ENCODE measurements at regions of chr5 and their contacts with region 1.

Region 1: DNA sequence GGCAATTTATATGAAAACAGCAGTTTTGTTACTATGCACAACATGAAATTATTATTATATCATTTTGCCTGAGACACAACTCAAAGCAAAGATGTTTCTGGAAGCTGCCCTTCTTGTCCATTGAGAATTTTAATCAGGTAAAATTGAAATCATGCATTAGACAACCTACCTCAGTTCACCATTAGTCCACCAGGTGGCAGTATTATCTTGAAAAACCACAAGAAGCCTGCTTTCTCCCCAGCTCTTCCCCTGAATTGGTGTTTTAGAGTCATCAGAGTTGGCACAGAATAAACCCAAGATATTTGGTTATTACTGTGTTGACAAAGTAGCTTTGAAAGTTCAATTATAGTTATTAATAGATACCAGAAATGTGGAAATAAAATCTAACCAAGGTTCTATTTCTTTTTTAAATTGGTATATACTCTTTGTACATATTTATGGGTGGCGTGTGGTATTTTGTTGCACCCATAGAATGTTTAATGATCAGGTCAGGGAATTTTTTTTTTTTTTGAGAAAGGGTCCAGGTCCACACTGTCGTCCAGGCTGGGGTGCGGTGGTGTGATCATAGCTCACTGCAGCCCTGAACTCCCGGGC is 25.7 kb downstream of the UTP15 start:
- DNase-seq: peak; percentile 32
- H3K4me3 Mint-ChIP-seq: no peak overlapping the region
- H3K27ac Mint-ChIP-seq: no peak overlapping the region
- H3K4me1 Mint-ChIP-seq: peaks cover 1% of the 10 kb centered on the region
- H3K27me3 Mint-ChIP-seq: peaks cover 5% of the 10 kb centered on the region

Region 2: GRCh38 chr5:73565139-73565968 is 25.8 kb before region 1 on chr5 and contains the starts of genes ANKRA2 and UTP15:
- CTCF ChIA-PET with region 1: interaction called, 10 read pairs
- POLR2A ChIA-PET with region 1: interaction called, 3 read pairs
- DNase-seq: peak; percentile 98
- H3K4me3 Mint-ChIP-seq: peak within 1 kb of the TSS; percentile 91
- H3K27ac Mint-ChIP-seq: peak within 1 kb of the TSS; percentile 95
- H3K4me1 Mint-ChIP-seq: peaks cover 44% of the 10 kb centered on the region
- H3K27me3 Mint-ChIP-seq: no peaks in the 10 kb centered on the region
- total RNA-seq, gene ANKRA2: 23.9 to 27.1 TPM
- total RNA-seq, gene UTP15: 15.1 to 15.4 TPM

Region 3: GRCh38 chr5:73693481-73694061 is 102.4 kb after region 1 on chr5:
- CTCF ChIA-PET with region 1: interaction called, 13 read pairs
- POLR2A ChIA-PET with region 1: no interaction called
- DNase-seq: no peak
- H3K4me3 Mint-ChIP-seq: no peak overlapping the region
- H3K27ac Mint-ChIP-seq: no peak overlapping the region
- H3K4me1 Mint-ChIP-seq: peaks cover 9% of the 10 kb centered on the region
- H3K27me3 Mint-ChIP-seq: peaks cover 14% of the 10 kb centered on the region

Region 4: DNA sequence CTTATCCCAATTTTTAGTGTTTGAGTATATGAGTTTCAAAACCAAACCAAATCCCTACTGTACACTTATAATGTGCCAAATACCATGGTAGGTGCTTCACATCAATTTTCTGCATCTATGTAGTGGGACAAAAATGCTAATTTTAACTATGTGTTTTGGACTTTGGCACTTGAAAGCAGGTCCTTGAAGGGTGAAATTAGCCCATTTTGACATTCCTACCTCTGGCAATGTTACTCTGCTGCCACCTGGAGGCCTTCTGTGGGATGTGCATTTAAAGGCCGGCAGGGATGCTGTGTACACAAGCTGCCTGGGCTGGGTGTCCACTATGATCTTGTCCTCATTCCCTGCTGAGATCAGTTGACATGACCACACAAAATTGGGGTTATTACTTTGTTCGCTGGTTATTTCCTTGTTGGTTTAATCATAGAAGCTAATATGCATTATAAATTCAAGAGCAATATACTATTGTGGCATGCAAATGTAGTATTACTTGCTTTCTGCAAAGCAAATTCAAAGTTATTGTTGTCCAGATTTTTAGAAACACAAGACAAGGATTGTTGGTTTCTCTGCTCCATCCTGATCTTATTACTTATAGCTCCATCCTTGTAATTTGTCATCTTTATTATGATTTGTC is 201.6 kb after region 1 on chr5:
- CTCF ChIA-PET with region 1: interaction called, 74 read pairs
- POLR2A ChIA-PET with region 1: no interaction called
- DNase-seq: peak; percentile 71
- H3K4me3 Mint-ChIP-seq: no peak overlapping the region
- H3K27ac Mint-ChIP-seq: no peak overlapping the region
- H3K4me1 Mint-ChIP-seq: peaks cover 9% of the 10 kb centered on the region
- H3K27me3 Mint-ChIP-seq: peaks cover 30% of the 10 kb centered on the region

Measured in activated CD4-positive, alpha-beta memory T cell treated with anti-CD3 and anti-CD28 coated beads, Interleukin-2, amount 10 ng/mL, durations not matched to agents 7 days and 5 days (primary cell).